Endothelial cell of umbilical vein (primary cell): ENCODE measurements at regions of chr16 and their contacts with region 1.

Region 1: GRCh38 chr16:30829130-30830071 is 42.4 kb upstream of the ZNF629 start:
- DNase-seq: no peak
- H3K4me3 ChIP-seq: no peak overlapping the region
- H3K27ac ChIP-seq: no peak overlapping the region
- H3K4me1 ChIP-seq: no peaks in the 10 kb centered on the region
- H3K27me3 ChIP-seq: peaks cover 0 to 4% of the 10 kb centered on the region in 2 experiments
- CTCF ChIP-seq: no peak
- POLR2A ChIP-seq: no peak

Region 2: DNA sequence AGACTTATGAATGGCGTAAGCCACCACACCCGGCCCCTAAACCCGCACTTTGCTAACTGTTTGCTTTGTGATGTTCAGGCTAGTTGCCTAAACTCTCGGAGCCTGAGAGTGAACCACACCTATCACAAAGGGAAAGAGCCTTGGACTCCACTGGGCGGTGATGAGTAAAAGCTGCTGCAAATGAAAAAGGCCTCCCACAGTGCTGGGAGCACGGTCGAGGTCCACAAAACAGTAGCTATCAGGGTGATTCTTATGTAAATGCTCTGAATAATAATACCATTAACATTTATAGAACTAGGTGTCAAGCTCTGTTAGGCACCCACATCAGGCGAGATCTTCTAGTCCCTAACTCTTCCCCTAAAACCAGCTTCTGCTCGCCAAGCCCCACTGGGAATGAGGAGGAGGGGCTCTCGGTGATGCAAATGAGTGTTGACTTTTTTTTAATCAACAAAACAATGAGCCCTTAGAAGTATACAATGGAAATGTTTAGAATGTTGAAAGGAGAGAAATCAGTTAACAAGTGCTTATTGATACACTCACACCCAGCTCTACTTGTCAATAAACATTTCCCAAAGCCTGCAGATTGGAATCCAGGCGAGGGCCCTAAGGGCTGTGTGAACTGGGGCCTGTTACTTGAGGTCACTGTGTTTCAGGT is 151.3 kb before region 1 on chr16:
- CTCF ChIA-PET with region 1: no interaction called
- POLR2A ChIA-PET with region 1: interaction called, 10 read pairs
- dilution Hi-C with region 1: no loop called
- intact Hi-C with region 1: no loop called
- DNase-seq: no peak
- H3K4me3 ChIP-seq: no peak overlapping the region
- H3K27ac ChIP-seq: no peak overlapping the region
- H3K4me1 ChIP-seq: no peaks in the 10 kb centered on the region
- H3K27me3 ChIP-seq: no peaks in the 10 kb centered on the region
- CTCF ChIP-seq: no peak
- POLR2A ChIP-seq: no peak

Region 3: GRCh38 chr16:30867747-30868146 is 38.3 kb after region 1 on chr16:
- CTCF ChIA-PET with region 1: no interaction called
- POLR2A ChIA-PET with region 1: no interaction called
- dilution Hi-C with region 1: no loop called
- intact Hi-C with region 1: no loop called
- DNase-seq: no peak
- H3K4me3 ChIP-seq: no peak overlapping the region
- H3K27ac ChIP-seq: no peak overlapping the region
- H3K4me1 ChIP-seq: no peaks in the 10 kb centered on the region
- H3K27me3 ChIP-seq: no peaks in the 10 kb centered on the region
- CTCF ChIP-seq: peak in 1 of 2 donors; percentile 3
- POLR2A ChIP-seq: no peak

Region 4: DNA sequence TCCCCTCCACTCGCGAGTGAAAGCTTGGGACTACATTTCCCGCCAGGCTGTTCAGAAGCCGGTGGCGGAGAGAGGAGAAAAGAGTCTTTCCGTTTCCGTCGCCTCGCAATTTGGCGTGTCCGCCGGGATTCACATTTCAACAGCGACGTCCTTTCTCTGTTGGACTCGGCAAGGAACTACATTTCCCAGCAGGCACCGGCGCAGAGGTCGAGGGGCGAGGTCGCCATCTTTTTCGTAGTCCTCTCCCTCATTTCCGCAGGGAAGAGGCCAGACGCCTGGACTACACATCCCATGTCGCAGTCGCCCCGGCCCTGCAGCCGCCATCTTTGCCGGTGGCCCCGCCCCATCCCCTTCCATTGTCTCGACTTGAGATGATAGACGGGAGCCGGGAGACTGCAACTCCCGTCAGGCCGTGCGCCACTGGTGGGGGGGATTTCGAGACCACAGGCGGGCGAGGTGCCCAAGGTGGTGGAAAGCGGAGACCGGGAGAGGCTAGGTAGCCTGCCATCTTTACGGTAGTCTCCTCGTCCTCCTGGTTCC is 93.1 kb after region 1 on chr16:
- CTCF ChIA-PET with region 1: no interaction called
- POLR2A ChIA-PET with region 1: no interaction called
- dilution Hi-C with region 1: no loop called
- intact Hi-C with region 1: no loop called
- DNase-seq: peak; percentile 100
- H3K4me3 ChIP-seq: peak overlapping the region; percentile 18 to 87 (median 67)
- H3K27ac ChIP-seq: peak overlapping the region; percentile 66
- H3K4me1 ChIP-seq: peaks cover 2% of the 10 kb centered on the region
- H3K27me3 ChIP-seq: no peaks in the 10 kb centered on the region
- CTCF ChIP-seq: no peak
- POLR2A ChIP-seq: peak; percentile 51

Region 5: GRCh38 chr16:30958175-30959079 is 129.0 kb after region 1 on chr16:
- CTCF ChIA-PET with region 1: no interaction called
- POLR2A ChIA-PET with region 1: no interaction called
- dilution Hi-C with region 1: no loop called
- intact Hi-C with region 1: no loop called
- DNase-seq: peak; percentile 34
- H3K4me3 ChIP-seq: peak overlapping the region; percentile 33 to 67 (median 54)
- H3K27ac ChIP-seq: no peak overlapping the region
- H3K4me1 ChIP-seq: peaks cover 12% of the 10 kb centered on the region
- H3K27me3 ChIP-seq: no peaks in the 10 kb centered on the region
- CTCF ChIP-seq: no peak
- POLR2A ChIP-seq: no peak